Dendritic cell treated with granulocyte-macrophage colony-stimulating factor and Interleukin-4, amounts not matched to agents 40 ng/mL and 50 ng/mL, for 4 days (primary cell): ENCODE measurements at regions of chr17 and their contacts with region 1.

Region 1: DNA sequence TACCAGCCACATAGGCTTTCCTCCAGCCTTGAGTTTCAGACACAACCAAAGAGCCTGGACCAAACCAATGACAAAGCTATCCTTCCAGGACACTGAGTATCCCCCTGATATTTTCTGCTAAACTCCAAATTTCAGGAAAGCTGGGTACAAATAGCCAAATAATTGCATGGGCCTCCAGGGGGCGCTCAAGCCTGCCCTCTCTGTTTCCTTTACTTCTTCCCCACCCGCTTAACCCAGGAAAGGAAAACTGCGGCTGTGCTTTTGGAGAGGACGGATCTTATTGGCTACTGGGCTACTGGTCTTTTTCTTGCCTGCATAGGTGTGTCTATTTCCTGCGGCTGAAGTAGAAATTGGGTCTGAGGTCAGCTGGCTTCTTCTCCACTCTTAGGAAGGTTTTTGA is 30.1 kb downstream of the GNGT2 start:
- H3K4me3 Mint-ChIP-seq: no peak overlapping the region
- H3K27ac Mint-ChIP-seq: no peak overlapping the region
- H3K4me1 Mint-ChIP-seq: peaks cover 5% of the 10 kb centered on the region
- H3K27me3 Mint-ChIP-seq: peaks cover 18% of the 10 kb centered on the region

Region 2: GRCh38 chr17:49227436-49228261 is 47.3 kb after region 1 on chr17:
- intact Hi-C with region 1: loop called (anchors 1 kb)
- H3K4me3 Mint-ChIP-seq: no peak overlapping the region
- H3K27ac Mint-ChIP-seq: no peak overlapping the region
- H3K4me1 Mint-ChIP-seq: peaks cover 55% of the 10 kb centered on the region
- H3K27me3 Mint-ChIP-seq: peaks cover 80% of the 10 kb centered on the region

Region 3: GRCh38 chr17:49266233-49266632 is 85.9 kb after region 1 on chr17:
- intact Hi-C with region 1: no loop called
- H3K4me3 Mint-ChIP-seq: no peak overlapping the region
- H3K27ac Mint-ChIP-seq: no peak overlapping the region
- H3K4me1 Mint-ChIP-seq: peaks cover 6% of the 10 kb centered on the region
- H3K27me3 Mint-ChIP-seq: peaks cover 21% of the 10 kb centered on the region

Region 4: GRCh38 chr17:49290690-49291359 is 110.5 kb after region 1 on chr17:
- intact Hi-C with region 1: loop called (anchors 2 kb)
- H3K4me3 Mint-ChIP-seq: no peak overlapping the region
- H3K27ac Mint-ChIP-seq: no peak overlapping the region
- H3K4me1 Mint-ChIP-seq: no peaks in the 10 kb centered on the region
- H3K27me3 Mint-ChIP-seq: no peaks in the 10 kb centered on the region

Region 5: DNA sequence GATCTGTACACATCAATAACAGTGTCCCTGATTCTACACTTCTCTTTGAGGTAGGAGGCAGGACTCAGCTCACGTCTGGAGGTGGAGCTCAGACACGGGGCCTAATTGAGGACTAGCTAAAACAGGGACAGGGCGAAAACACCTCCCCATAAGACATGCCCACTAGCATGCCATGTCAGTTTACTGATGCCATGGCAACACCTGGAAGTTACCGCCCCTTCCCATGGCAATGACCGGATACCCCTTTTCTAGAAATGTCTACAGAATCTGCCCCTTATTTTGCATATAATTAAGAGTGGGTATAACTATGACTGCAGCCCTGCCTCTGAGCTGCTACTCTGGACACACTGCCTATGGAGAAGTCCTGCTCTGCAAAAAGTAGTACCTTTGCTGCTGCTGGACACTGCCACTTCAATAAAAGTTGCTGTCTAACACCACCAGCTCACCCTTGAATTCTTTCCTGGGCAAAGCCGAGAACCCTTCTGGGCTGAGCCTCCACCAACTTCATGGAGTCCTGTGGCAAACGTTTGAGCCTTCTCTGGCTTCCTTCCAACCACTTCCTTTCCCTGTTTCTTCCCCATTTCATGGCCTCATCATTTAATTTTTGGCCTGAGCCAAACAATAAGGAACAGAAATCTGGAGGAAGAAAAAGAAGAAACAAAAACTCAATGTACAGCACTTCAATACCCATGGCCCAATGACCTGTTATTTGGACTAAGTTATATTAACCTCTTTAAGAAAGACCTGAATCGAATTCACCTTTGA is 213.4 kb after region 1 on chr17:
- intact Hi-C with region 1: loop called (anchors 2 kb)
- H3K4me3 Mint-ChIP-seq: peak overlapping the region; percentile 42
- H3K27ac Mint-ChIP-seq: peak overlapping the region; percentile 86
- H3K4me1 Mint-ChIP-seq: peaks cover 64% of the 10 kb centered on the region
- H3K27me3 Mint-ChIP-seq: no peaks in the 10 kb centered on the region